Uterus (tissue), 4 donors: ENCODE measurements at regions of chr18 and their contacts with region 1.

Region 1: DNA sequence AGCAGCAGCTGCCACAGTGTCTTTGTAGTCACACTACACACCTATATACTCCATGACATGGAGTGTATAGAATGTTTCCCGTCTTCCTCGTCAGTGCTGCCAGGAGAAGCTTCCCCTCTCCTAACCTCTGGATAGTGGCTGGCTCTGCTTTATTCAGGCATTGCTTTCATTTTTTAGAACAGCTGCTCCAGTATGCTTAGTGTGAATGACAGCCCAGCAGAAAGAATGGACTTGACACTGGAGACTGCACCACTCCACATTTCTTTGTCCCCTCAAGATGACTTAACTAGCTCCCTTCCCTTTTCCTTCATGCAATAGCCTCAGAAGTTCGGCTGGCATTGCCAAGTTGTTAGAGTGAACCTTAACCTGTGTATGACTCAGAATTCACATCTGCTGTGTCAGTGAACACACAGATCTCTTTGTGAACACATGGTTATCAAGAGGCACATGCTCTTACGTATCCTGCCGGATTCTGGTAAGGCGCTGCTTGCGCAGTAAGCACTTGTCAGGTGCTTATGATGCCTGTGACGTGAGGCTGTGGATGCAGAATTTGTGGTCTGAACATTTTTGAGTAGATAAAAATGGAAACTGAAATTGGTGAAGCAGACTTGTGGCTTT is 73.9 kb downstream of the NEDD4L start:
- DNase-seq: peak in 1 of 2 donors; percentile 16
- H3K4me3 ChIP-seq: no peak overlapping the region
- H3K27ac ChIP-seq: no peak overlapping the region
- H3K4me1 ChIP-seq: no peaks in the 10 kb centered on the region
- H3K27me3 ChIP-seq: no peaks in the 10 kb centered on the region
- CTCF ChIP-seq: no peak
- POLR2A ChIP-seq: no peak

Region 2: DNA sequence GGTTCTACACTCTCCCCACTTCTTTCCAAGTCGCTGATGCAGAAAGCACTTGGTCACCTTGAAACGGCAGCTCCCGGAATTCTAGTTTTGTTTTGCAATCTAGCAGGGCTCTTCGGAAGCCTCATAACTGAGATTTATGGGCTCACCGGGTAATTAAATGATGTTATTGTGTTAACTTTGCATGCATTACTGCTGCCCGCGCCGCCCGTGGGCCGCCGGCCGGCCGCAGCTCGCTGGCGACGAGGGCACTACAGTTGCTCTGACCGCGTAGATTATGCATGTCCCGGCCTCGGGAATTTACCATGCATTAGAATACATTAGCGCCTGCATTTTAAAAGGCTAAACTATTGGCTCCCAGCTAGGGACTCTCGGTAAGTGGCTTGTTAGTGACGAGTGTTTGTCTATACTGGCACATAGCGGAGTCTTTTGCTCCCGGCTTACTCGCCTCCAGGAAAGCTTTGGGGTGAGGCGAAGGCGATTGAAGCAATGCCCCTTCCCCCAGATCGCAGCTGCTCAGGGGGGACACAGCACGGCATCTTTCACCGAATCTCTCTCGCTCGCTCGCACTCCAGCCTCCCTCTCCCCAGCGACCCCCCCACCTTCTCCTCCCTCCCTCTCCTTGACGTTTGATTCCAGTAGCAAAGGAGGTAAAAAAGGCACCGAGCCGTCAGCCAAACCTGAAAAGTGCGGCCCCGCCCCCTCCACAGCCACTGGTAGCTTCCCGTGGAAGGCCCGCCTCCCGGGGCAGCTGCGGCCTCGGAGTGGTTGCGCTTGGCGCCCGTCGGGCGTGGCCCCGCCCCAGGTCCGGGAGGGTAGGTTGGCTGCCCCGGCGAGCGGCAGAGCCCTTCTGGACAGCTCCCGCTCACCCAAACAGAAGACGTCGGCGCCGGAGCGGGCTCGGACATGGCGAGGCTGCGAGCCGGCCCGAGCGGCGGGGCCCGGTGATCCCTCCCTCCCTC is 683.1 kb before region 1 on chr18 and contains the start of gene ONECUT2:
- intact Hi-C with region 1: loop called (anchors 10 kb)
- DNase-seq: peak; percentile 77 to 86
- H3K4me3 ChIP-seq: peak within 1 kb of the TSS; percentile 17 to 45
- H3K27ac ChIP-seq: no peak within 1 kb of the TSS
- H3K4me1 ChIP-seq: peaks cover 0 to 12% of the 10 kb centered on the region in 2 donors
- H3K27me3 ChIP-seq: peaks cover 27 to 75% of the 10 kb centered on the region in 2 donors
- CTCF ChIP-seq: no peak
- POLR2A ChIP-seq: no peak
- total RNA-seq, gene ONECUT2: 0.07 TPM in 1 of 4 donors, not detected in the others

Region 3: GRCh38 chr18:57881818-57882413 is 236.0 kb before region 1 on chr18:
- intact Hi-C with region 1: loop called (anchors 10 kb)
- DNase-seq: peak; percentile 54 to 58
- H3K4me3 ChIP-seq: no peak overlapping the region
- H3K27ac ChIP-seq: no peak overlapping the region
- H3K4me1 ChIP-seq: no peaks in the 10 kb centered on the region
- H3K27me3 ChIP-seq: no peaks in the 10 kb centered on the region
- CTCF ChIP-seq: peak; percentile 79 to 87 (median 82)
- POLR2A ChIP-seq: no peak